ENCODE measurements at regions of chr4 and their contacts with region 1.

Region 1: GRCh38 chr4:150546286-150546685 is 35.7 kb upstream of the MAB21L2 start:
- DNase-seq: no peak
- H3K4me3 ChIP-seq: no peak overlapping the region
- H3K27ac ChIP-seq: no peak overlapping the region
- H3K4me1 ChIP-seq: no peaks in the 10 kb centered on the region
- H3K27me3 ChIP-seq: no peaks in the 10 kb centered on the region
- CTCF ChIP-seq: no peak

Region 2: DNA sequence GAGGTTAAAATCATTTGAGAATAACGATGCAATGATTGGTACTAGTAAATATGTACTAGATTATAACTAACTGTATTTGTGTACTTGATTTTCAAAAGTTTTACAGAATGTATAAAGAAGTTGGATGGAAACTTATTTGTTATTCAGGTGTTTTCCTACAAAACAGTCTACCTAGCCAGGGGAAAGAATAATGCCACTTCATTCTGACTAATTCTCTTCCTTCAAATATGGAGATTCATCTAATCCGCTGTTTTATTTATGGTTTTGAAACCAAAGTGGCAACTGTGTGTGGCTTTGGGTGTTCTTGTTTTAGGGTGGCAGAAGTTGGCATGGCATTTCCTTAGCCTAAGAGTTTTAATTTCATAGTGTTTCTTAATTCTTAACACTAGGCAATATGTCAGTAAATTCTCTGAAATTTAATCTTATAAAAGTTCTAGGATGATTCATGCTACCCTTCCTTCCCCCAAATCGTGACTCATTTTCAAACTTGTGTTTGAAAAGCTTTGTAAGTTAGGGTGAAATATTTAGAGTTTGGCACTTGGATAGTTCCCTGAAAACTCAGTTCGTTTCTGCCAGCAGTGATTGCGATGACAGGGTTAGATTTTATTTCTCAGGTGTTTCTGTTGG is 405.4 kb before region 1 on chr4:
- CTCF ChIA-PET with region 1: no interaction called
- dilution Hi-C with region 1: no loop called
- in situ Hi-C with region 1: no loop called
- intact Hi-C with region 1: no loop called
- DNase-seq: peak; percentile 60
- H3K4me3 ChIP-seq: no peak overlapping the region
- H3K27ac ChIP-seq: no peak overlapping the region
- H3K4me1 ChIP-seq: peaks cover 25% of the 10 kb centered on the region
- H3K27me3 ChIP-seq: no peaks in the 10 kb centered on the region
- CTCF ChIP-seq: no peak

Region 3: DNA sequence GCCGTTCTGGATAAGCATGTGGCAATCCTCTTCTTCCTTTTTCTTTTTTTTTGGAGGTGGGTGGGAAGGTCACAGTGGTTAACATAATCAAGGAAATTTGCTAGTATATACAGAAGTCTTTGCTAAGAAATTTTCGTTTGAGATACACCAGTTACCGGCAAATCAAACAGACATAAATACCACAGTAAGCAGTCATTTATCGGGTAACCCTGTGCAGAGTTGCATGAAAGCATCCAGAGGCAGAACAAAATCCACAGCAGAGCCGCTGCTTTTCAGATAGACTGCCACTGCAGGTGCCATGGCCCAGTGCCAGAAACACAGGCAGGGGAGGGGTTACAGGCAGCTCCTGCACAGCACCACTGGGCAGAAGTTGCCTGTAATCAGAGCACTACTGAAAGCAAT is 143.4 kb before region 1 on chr4:
- CTCF ChIA-PET with region 1: no interaction called
- dilution Hi-C with region 1: no loop called
- in situ Hi-C with region 1: no loop called
- intact Hi-C with region 1: no loop called
- DNase-seq: no peak
- H3K4me3 ChIP-seq: no peak overlapping the region
- H3K27ac ChIP-seq: no peak overlapping the region
- H3K4me1 ChIP-seq: no peaks in the 10 kb centered on the region
- H3K27me3 ChIP-seq: no peaks in the 10 kb centered on the region
- CTCF ChIP-seq: no peak

Region 4: GRCh38 chr4:150501009-150501727 is 45.1 kb before region 1 on chr4:
- CTCF ChIA-PET with region 1: no interaction called
- dilution Hi-C with region 1: loop called (anchors 5 kb)
- in situ Hi-C with region 1: no loop called
- intact Hi-C with region 1: no loop called
- DNase-seq: peak; percentile 87
- H3K4me3 ChIP-seq: no peak overlapping the region
- H3K27ac ChIP-seq: no peak overlapping the region
- H3K4me1 ChIP-seq: no peaks in the 10 kb centered on the region
- H3K27me3 ChIP-seq: no peaks in the 10 kb centered on the region
- CTCF ChIP-seq: no peak

Region 5: GRCh38 chr4:150593996-150594395 is 47.7 kb after region 1 on chr4:
- CTCF ChIA-PET with region 1: no interaction called
- dilution Hi-C with region 1: no loop called
- in situ Hi-C with region 1: no loop called
- intact Hi-C with region 1: no loop called
- DNase-seq: no peak
- H3K4me3 ChIP-seq: no peak overlapping the region
- H3K27ac ChIP-seq: no peak overlapping the region
- H3K4me1 ChIP-seq: no peaks in the 10 kb centered on the region
- H3K27me3 ChIP-seq: no peaks in the 10 kb centered on the region
- CTCF ChIP-seq: no peak

Region 6: GRCh38 chr4:150632639-150633038 is 86.4 kb after region 1 on chr4:
- CTCF ChIA-PET with region 1: no interaction called
- dilution Hi-C with region 1: no loop called
- in situ Hi-C with region 1: no loop called
- intact Hi-C with region 1: no loop called
- DNase-seq: no peak
- H3K4me3 ChIP-seq: no peak overlapping the region
- H3K27ac ChIP-seq: no peak overlapping the region
- H3K4me1 ChIP-seq: no peaks in the 10 kb centered on the region
- H3K27me3 ChIP-seq: no peaks in the 10 kb centered on the region
- CTCF ChIP-seq: no peak